ENCODE measurements at regions of chr7 and their contacts with region 1.

Region 1: GRCh38 chr7:5036446-5036845 is 9.2 kb upstream of the RBAK start:
- DNase-seq: no peak
- H3K4me3 ChIP-seq: no peak overlapping the region
- H3K27ac ChIP-seq: no peak overlapping the region
- H3K27me3 ChIP-seq: no peaks in the 10 kb centered on the region
- CTCF ChIP-seq: no peak

Region 2: GRCh38 chr7:4797858-4798705 is 238.4 kb before region 1 on chr7:
- CTCF ChIA-PET with region 1: interaction called, 12 read pairs
- POLR2A ChIA-PET with region 1: no interaction called
- DNase-seq: no peak
- H3K4me3 ChIP-seq: no peak overlapping the region
- H3K27ac ChIP-seq: no peak overlapping the region
- H3K27me3 ChIP-seq: no peaks in the 10 kb centered on the region
- CTCF ChIP-seq: peak; percentile 78

Measured in AG04450 (cell line).